OCI-LY7 (cell line): ENCODE measurements at regions of chr10 and their contacts with region 1.

Region 1: DNA sequence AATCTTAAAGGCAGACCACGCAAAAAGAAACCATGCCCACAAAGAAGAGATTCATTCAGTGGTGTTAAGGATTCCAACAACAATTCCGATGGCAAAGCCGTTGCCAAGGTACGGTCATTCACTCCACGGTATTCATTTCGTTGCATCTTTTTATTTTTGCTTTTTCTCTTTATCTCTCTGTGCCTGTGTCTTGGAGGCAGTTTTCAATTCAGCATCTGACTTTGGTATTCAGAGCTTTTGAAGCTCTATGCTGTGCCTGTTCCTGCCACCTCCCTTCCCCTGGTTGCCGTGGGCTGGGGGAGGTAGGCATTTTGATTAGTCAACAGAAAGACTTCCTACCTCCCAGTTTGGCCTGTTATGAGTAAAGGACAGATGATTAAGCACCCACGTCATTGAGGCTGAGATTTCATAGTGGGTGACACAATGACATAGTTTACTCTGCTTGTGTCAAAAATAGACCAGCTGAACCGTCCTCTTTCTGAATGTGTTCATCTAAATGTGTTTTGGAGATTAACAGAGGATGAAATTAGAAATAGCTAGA is 149.5 kb downstream of the ARID5B start:
- DNase-seq: no peak
- H3K4me3 ChIP-seq: peak overlapping the region; percentile 61
- H3K27ac ChIP-seq: no peak overlapping the region
- H3K4me1 ChIP-seq: peaks cover 70% of the 10 kb centered on the region
- CTCF ChIP-seq: no peak

Region 2: DNA sequence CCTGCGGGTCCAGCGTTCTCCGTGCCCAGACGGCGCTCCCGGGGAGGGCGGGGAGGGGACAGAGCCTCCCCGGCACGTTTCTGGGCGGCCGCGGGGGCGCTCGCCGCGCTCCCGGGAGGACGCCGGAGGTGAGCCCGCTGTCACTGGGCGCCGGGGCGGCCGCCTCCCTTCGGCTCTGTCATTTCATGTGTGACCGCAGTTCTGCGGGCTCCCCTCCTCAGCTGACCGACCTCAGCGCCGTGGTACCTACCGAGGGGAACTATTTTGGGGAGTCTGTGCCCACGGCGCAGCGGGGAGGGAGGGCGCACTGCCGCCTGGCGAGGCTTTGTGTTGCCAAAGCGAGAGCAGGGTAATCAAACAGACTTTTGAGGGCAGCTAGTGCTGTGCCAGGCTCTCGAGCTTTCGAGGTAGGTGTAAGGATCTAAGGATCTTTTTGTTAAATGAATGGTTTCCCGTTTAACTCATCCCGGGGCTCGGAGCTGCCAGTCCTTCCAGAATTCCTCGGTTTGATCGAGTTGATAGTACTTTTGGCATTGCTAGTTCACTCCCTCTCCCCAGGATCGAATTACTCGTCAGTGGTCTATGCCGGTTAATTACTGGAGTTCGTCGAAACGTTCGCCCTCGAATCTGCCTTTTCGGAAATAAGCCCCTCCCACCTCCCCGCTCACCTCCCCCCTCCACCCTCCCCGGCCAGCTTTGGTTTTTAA is 147.6 kb before region 1 on chr10:
- CTCF ChIA-PET with region 1: interaction called, 4 read pairs
- POLR2A ChIA-PET with region 1: interaction called, 277 read pairs
- intact Hi-C with region 1: loop called (anchors 2 kb)
- DNase-seq: peak; percentile 77
- H3K4me3 ChIP-seq: peak overlapping the region; percentile 93
- H3K27ac ChIP-seq: peak overlapping the region; percentile 96
- H3K4me1 ChIP-seq: peaks cover 50% of the 10 kb centered on the region
- CTCF ChIP-seq: peak; percentile 59

Region 3: DNA sequence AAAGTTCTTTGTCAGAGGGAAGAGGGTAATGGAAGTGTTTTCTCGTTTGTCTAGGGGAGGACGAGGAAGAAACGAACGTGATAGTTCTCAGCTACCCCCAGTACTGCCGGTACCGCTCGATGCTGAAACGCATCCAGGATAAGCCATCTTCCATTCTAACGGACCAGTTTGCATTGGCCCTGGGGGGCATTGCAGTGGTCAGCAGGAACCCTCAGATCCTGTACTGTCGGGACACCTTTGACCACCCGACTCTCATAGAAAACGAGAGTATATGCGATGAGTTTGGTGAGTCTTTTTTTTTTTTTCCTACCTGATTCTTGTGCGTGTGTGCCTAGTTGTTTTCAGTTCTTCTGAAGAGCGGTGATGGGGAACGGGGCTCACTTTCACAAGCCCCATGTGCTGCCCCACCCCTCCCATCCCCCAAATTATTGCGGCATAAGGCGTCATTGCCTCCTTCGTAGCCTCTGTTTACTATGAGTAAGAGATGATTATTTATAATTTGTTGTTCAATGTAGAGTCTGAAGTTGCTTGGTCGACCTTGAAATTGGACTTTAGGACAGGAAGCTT is 50.8 kb before region 1 on chr10:
- CTCF ChIA-PET with region 1: no interaction called
- POLR2A ChIA-PET with region 1: interaction called, 12 read pairs
- intact Hi-C with region 1: no loop called
- DNase-seq: peak; percentile 85
- H3K4me3 ChIP-seq: peak overlapping the region; percentile 65
- H3K27ac ChIP-seq: peak overlapping the region; percentile 83
- H3K4me1 ChIP-seq: peaks cover 98% of the 10 kb centered on the region
- CTCF ChIP-seq: no peak

Region 4: DNA sequence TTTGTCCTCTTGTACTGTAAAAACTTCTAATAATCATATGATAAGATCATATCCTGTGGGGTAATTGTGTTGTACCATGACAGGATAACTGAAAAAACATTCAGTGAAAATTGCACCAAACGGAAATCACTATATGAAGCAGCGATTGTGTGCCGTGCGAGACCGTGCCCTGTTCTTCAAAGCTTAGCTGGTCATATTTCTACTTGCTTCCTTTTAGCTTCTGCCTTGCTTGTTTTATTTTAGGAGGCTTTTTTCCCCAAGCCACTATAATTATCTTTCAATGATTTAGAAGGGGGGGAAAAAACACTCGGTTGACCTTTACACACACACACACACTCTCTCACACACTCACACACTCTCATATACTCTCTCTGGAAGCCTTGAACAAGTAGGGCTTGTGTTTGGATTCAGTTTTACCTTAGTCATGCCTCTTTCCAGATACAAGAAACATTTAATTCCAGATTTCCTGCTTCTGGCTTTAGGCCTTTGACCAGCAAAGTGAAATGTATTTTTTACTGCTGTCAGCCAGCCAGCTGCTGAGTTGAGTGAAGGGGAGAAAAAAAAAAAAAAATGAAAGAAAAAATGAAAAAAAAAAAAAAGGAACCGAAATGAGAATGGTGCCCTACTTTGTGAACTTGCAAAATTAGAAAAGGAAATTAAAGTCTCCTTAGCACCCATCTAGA is 31.9 kb after region 1 on chr10:
- CTCF ChIA-PET with region 1: no interaction called
- POLR2A ChIA-PET with region 1: interaction called, 13 read pairs
- intact Hi-C with region 1: loop called (anchors 2 kb)
- DNase-seq: peak; percentile 73
- H3K4me3 ChIP-seq: peak overlapping the region; percentile 61
- H3K27ac ChIP-seq: peak overlapping the region; percentile 87
- H3K4me1 ChIP-seq: peaks cover 54% of the 10 kb centered on the region
- CTCF ChIP-seq: no peak

Region 5: DNA sequence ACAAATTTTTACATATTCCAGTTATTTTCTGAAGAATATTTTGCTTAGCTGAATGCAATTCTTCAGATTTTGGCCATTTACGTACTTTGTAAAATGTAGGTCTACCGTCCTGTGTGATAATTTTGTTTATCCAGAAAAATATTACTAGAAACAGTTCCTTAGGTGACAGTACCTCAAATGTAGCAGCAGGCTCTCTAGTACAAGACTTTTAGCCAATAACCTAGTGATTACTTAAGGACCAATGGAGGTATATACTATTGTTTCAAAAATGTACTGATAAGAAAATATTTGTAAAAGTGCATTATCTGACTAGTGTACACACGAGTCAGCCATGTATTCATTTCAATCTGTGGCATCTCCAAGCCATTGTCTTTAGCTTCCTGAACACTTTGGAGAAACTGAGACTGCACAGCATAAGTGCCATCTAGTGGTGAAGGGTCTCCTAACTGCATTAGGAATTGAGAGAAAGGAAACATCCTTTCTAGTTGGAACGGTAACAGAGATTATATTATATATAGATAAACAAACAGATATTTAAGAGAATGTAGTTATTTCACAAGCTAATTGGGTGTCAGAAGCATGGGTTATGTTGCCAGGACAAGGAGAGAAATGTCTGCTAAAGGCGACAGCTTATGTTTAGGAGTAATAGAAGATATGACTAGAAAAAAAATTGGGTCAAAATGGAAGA is 194.0 kb after region 1 on chr10:
- CTCF ChIA-PET with region 1: no interaction called
- POLR2A ChIA-PET with region 1: interaction called, 10 read pairs
- intact Hi-C with region 1: no loop called
- DNase-seq: peak; percentile 86
- H3K4me3 ChIP-seq: no peak overlapping the region
- H3K27ac ChIP-seq: peak overlapping the region; percentile 67
- H3K4me1 ChIP-seq: peaks cover 26% of the 10 kb centered on the region
- CTCF ChIP-seq: peak; percentile 99